Tibial artery (tissue), 4 donors: ENCODE measurements at regions of chr15 and their contacts with region 1.

Region 1: GRCh38 chr15:40108855-40109735 is at the start of gene BMF:
- DNase-seq: peak; percentile 100
- H3K4me3 ChIP-seq: peak within 1 kb of the TSS; percentile 72 to 91
- H3K27ac ChIP-seq: peak within 1 kb of the TSS; percentile 77 to 79
- H3K4me1 ChIP-seq: peaks cover 0 to 50% (median 34%) of the 10 kb centered on the region in 4 donors
- H3K27me3 ChIP-seq: peaks cover 0 to 6% of the 10 kb centered on the region in 2 donors
- CTCF ChIP-seq: peak in 1 of 2 experiments; percentile 14

Region 2: GRCh38 chr15:40069178-40070165 is 39.6 kb before region 1 on chr15:
- intact Hi-C with region 1: loop called (anchors 2 kb)
- DNase-seq: peak; percentile 92 to 99
- H3K4me3 ChIP-seq: no peak overlapping the region
- H3K27ac ChIP-seq: peak overlapping the region; percentile 52 to 72
- H3K4me1 ChIP-seq: peaks cover 0 to 25% (median 14%) of the 10 kb centered on the region in 4 donors
- H3K27me3 ChIP-seq: no peaks in the 10 kb centered on the region
- CTCF ChIP-seq: peak in 1 of 2 experiments; percentile 27

Region 3: DNA sequence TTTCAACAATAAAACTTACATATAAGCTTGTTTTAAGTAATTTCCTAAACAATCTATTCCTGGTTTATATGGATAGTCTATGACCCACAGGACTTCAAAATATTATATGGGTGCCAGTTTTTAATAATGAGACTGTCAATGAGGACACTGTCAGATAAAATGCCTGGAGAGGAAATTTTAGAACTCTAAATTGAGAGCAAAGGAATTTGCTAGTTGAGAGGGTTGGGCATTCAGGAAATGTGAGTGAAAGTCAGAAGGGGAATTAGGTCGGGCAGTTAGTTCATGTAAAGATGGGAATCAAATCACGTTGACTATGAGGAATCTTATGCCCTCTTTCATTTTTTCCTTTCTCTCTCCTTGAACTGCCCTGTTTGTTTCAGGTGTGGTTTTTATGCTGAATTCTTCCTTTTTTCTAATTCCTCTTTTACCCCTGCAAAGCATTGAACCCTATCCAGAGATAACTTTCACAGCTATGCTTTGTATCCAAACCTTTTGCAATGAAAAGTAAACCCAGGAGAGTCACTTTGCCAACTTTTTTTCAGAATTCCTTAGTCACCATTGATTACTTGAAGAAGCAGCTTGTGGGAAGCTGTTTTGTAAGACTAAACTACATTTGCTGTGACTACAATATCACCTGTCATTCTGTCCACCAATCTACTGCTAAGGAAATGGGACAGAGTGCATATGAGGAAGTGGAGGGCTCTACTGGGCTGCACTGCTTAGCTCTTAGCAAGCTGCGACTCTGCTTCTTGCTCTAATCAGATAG is 1149.8 kb after region 1 on chr15:
- intact Hi-C with region 1: loop called (anchors 10 kb)
- DNase-seq: no peak
- H3K4me3 ChIP-seq: no peak overlapping the region
- H3K27ac ChIP-seq: no peak overlapping the region
- H3K4me1 ChIP-seq: no peaks in the 10 kb centered on the region
- H3K27me3 ChIP-seq: no peaks in the 10 kb centered on the region
- CTCF ChIP-seq: no peak